HepG2 (cell line): ENCODE measurements at regions of chr6 and their contacts with region 1.

Region 1: GRCh38 chr6:153618805-153619215 is 420.2 kb upstream of the OPRM1 start:
- DNase-seq: no peak
- ATAC-seq: peak; percentile 97
- H3K4me3 ChIP-seq: no peak overlapping the region
- H3K27ac ChIP-seq: no peak overlapping the region
- H3K4me1 ChIP-seq: peaks cover 18% of the 10 kb centered on the region; the same call in 1 of the 2 replicates
- H3K27me3 ChIP-seq: no peaks in the 10 kb centered on the region
- CTCF ChIP-seq: no peak
- EP300 ChIP-seq: peak in 1 of 2 experiments; percentile 42; a peak in 1 of 4 replicates
- POLR2A ChIP-seq: no peak
- RAD21 ChIP-seq: no peak

Region 2: DNA sequence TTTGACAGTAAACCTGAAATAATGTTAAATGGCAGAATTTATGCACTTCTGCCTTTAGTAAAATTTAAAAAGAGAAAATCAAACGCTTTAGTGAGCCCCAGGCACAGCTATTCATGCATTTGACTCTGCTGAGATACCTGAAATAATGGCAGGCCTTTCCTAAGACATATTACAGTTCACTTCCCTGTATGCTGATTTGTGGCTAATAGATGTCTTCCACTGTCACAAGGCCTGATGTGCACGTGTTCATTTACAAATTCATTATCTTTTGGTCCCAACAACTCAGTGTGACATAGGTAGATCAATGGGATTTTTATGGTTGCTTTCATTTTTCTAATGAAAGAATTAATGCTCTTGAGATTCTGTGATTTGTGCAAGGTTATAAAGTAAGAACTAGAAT is 38.0 kb before region 1 on chr6:
- CTCF ChIA-PET with region 1: no interaction called
- POLR2A ChIA-PET with region 1: no interaction called
- in situ Hi-C with region 1: no loop called
- intact Hi-C with region 1: no loop called
- DNase-seq: no peak
- ATAC-seq: no peak
- H3K4me3 ChIP-seq: no peak overlapping the region
- H3K27ac ChIP-seq: no peak overlapping the region
- H3K4me1 ChIP-seq: no peaks in the 10 kb centered on the region
- H3K27me3 ChIP-seq: no peaks in the 10 kb centered on the region
- CTCF ChIP-seq: no peak
- EP300 ChIP-seq: no peak
- POLR2A ChIP-seq: no peak
- RAD21 ChIP-seq: no peak

Region 3: DNA sequence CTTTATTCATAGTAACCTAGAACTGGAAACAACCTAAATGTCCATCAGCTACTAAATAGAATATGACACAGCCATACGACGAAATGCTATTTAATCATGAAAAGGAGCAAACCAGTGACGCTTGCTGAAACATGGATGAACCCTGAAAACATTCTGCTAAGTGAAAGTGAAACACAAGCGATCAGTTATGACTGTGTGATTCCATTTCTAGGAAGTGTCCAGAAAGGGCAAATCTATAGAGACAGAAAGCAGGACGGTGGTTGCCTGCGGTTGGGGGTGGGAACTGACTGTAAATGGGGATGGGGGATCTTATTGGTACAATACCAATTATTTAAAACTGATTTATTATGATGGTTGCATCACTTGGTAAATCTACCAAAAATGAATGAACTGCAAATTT is 611.0 kb after region 1 on chr6:
- CTCF ChIA-PET with region 1: no interaction called
- POLR2A ChIA-PET with region 1: no interaction called
- in situ Hi-C with region 1: no loop called
- intact Hi-C with region 1: loop called (anchors 5 kb)
- DNase-seq: no peak
- ATAC-seq: peak; percentile 54; the same call in 2 of the 3 replicates
- H3K4me3 ChIP-seq: peak overlapping the region in 1 of 3 experiments; percentile 16; a peak in 1 of 6 replicates
- H3K27ac ChIP-seq: no peak overlapping the region
- H3K4me1 ChIP-seq: no peaks in the 10 kb centered on the region
- H3K27me3 ChIP-seq: peaks cover 0 to 4% of the 10 kb centered on the region in 2 experiments; a peak in 2 of 5 replicates
- CTCF ChIP-seq: no peak
- EP300 ChIP-seq: no peak
- POLR2A ChIP-seq: no peak
- RAD21 ChIP-seq: no peak